ENCODE measurements at regions of chr1 and their contacts with region 1.

Region 1: GRCh38 chr1:196309386-196309785 is 298.9 kb downstream of the KCNT2 start:
- DNase-seq: peak; percentile 21
- H3K4me3 ChIP-seq: no peak overlapping the region
- H3K27ac ChIP-seq: no peak overlapping the region
- H3K4me1 ChIP-seq: no peaks in the 10 kb centered on the region
- H3K27me3 ChIP-seq: no peaks in the 10 kb centered on the region
- CTCF ChIP-seq: peak; percentile 14 to 43

Region 2: DNA sequence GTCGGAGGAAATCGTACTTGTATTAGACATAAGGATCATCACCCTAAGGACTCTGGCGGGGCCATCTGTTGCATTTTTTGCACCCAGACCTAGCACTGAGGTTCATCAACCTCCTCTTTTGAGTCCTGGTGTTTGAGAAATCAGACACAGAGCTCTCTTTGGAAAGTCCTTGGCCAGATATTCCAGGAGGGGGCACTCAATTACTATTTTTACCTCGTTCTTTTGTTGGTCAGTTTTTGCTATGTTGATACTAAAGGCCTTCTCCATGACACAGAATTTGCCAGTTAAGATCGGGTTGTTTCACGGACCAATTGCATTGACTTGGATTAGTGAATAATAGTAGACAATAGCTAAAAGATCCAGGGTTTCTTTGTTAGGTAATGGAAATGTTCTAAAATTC is 412.3 kb before region 1 on chr1:
- CTCF ChIA-PET with region 1: no interaction called
- dilution Hi-C with region 1: no loop called
- in situ Hi-C with region 1: no loop called
- intact Hi-C with region 1: loop called (anchors 2 kb)
- DNase-seq: peak; percentile 18
- H3K4me3 ChIP-seq: no peak overlapping the region
- H3K27ac ChIP-seq: no peak overlapping the region
- H3K4me1 ChIP-seq: peaks cover 19% of the 10 kb centered on the region
- H3K27me3 ChIP-seq: no peaks in the 10 kb centered on the region
- CTCF ChIP-seq: peak; percentile 20 to 34

Region 3: DNA sequence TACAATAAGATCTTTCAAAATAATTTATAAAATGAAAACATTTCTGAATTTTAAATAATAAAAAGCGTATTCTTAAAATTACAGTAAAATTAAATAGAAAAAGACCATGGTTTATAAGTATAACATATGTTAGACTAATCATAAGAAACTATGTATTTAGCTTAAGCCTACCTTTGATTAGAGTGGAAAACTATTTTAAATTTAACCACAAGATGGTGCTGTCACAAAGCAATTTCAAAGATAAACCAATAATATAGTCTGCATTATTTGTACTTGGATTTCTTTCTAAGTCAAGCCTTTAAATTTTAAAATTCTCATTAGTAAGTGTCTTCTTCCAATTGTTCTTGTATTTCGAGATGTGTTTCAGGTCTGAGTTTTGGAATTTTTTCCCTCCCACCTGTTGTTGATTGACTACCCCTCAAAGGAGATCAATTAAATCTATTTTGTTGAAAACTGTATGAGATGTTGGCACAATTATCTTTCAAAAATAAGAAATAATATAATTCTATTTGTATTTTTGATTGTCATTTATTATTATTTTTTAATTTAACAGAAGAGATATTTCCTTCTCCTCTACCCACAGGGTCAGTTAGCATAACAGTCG is 160.9 kb before region 1 on chr1:
- CTCF ChIA-PET with region 1: interaction called, 9 read pairs
- dilution Hi-C with region 1: no loop called
- in situ Hi-C with region 1: loop called (anchors 5 to 10 kb)
- intact Hi-C with region 1: loop called (anchors 1 kb)
- DNase-seq: peak; percentile 23
- H3K4me3 ChIP-seq: no peak overlapping the region
- H3K27ac ChIP-seq: no peak overlapping the region
- H3K4me1 ChIP-seq: peaks cover 8% of the 10 kb centered on the region
- H3K27me3 ChIP-seq: no peaks in the 10 kb centered on the region
- CTCF ChIP-seq: peak; percentile 44 to 51